ENCODE measurements at regions of chr12 and their contacts with region 1.

Region 1: GRCh38 chr12:15151161-15152120 is 69.8 kb downstream of the RERG start:
- DNase-seq: no peak

Region 2: DNA sequence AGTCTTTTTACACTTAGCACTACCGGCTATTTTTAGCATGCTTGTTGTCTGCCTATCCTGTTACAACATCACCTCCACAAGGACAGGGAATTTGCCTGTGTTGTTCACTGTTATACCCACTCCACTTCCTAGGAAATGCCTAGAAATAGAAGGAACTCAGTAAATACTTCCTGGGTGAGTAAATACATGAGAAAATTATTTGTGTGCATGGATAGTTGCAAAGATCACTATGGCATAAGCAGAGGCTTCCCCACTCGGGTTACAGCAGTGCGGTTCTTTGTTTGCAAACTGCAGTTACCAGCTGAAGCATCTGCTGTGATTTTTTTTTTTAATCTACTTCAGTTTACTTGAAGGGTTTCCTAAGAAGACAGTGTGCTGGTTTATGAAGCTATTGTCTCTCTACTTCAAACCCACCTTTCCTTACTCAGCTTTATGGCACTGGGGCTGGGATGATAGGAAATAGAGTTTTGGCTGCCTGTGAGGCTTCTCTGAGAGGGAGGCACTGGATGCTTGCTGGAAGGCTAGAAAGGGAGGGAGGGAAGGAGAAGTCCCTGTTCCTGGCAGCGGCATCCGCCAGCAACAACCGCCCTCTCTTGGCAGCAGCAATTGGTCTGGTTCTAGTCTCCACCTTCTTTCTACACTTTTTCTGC is 149.6 kb before region 1 on chr12:
- intact Hi-C with region 1: loop called (anchors 10 kb)
- DNase-seq: peak; percentile 76

Region 3: DNA sequence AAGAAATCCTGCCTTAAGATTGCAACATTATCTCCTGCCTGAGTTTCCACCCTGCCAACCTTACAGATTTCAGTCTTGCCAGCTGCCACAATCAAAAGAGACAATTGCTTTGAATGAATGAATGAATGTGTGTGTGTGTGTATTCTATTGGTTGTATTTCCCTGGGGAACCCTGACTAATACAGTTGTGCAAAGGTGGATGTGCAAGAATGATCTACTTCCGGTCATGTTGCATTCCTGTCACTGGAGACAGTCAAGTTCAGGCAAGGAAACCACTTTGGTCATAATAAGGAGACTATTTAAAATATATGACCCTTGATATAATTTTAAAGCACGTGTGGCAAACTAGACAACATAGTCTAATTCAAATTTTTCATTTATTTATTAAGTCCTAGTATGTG is 56.7 kb after region 1 on chr12:
- intact Hi-C with region 1: loop called (anchors 5 kb)
- DNase-seq: no peak

Region 4: DNA sequence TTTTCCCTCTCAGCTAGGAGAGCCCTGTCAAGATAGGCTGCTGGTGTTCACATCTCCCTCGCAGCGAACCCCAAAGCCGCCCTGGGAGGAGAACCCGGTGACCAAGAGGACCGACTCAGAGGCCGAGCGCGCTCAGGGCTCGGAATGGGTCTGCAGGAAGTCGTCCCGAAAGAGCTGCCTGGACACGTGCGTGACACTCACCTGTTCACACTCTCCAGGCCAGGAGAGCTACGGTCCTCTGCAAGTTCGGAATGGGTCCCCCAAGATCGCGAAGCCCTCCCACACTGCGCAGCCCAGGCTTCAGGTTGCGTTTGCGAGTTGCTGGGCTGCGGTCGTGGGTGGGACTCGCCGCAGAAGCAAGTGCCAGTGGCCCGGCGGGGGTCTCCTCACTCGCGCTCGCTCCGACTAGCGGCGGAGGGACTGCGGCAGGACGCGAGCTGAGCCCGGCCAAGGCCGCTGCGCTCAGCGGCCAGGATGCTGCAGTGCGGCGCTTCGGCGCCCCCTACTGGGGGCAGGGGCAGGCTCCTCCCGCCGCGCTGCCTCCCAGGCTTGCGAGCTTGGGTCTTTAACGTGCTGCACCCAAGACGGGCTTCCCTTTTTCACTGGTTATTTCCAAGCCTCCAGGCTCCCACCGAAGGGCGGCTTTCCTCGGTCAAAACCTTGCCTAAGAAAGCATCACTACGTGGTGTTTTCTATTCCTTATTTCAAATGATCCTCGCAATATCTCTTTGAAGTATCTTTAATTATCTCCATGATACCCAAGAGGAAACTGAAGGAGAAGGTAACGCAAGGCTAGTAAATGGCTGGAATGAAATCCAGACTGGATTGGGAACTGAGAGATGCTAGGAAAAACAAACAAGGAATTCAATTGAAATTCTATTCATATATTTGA is 69.8 kb after region 1 on chr12 and contains the start of gene RERG:
- intact Hi-C with region 1: loop called (anchors 2 kb)
- DNase-seq: peak; percentile 87
- total RNA-seq, gene RERG: 3.1 TPM

Measured in cardiac septum (tissue), 1 donor.